Activated naive CD4-positive, alpha-beta T cell treated with anti-CD3 and anti-CD28 coated beads for 36 hours (primary cell): ENCODE measurements at regions of chr16 and their contacts with region 1.

Region 1: GRCh38 chr16:31700526-31701388 is 172.8 kb upstream of the ZNF267 start:
- DNase-seq: peak; percentile 93
- H3K4me3 Mint-ChIP-seq: peak overlapping the region; percentile 85
- H3K27ac Mint-ChIP-seq: peak overlapping the region; percentile 95
- H3K4me1 Mint-ChIP-seq: peaks cover 27% of the 10 kb centered on the region
- H3K27me3 Mint-ChIP-seq: no peaks in the 10 kb centered on the region

Region 2: GRCh38 chr16:31354394-31355291 is 346.1 kb before region 1 on chr16 and contains the start of gene ITGAX:
- CTCF ChIA-PET with region 1: no interaction called
- intact Hi-C with region 1: loop called (anchors 2 kb)
- DNase-seq: peak; percentile 91
- H3K4me3 Mint-ChIP-seq: no peak within 1 kb of the TSS
- H3K27ac Mint-ChIP-seq: peak within 1 kb of the TSS; percentile 80
- H3K4me1 Mint-ChIP-seq: peaks cover 27% of the 10 kb centered on the region
- H3K27me3 Mint-ChIP-seq: no peaks in the 10 kb centered on the region
- total RNA-seq, gene ITGAX: 2.4 to 2.9 TPM

Region 3: GRCh38 chr16:31382485-31383161 is 318.1 kb before region 1 on chr16:
- CTCF ChIA-PET with region 1: no interaction called
- intact Hi-C with region 1: loop called (anchors 10 kb)
- DNase-seq: peak; percentile 81
- H3K4me3 Mint-ChIP-seq: no peak overlapping the region
- H3K27ac Mint-ChIP-seq: no peak overlapping the region
- H3K4me1 Mint-ChIP-seq: peaks cover 15% of the 10 kb centered on the region
- H3K27me3 Mint-ChIP-seq: peaks cover 5% of the 10 kb centered on the region

Region 4: DNA sequence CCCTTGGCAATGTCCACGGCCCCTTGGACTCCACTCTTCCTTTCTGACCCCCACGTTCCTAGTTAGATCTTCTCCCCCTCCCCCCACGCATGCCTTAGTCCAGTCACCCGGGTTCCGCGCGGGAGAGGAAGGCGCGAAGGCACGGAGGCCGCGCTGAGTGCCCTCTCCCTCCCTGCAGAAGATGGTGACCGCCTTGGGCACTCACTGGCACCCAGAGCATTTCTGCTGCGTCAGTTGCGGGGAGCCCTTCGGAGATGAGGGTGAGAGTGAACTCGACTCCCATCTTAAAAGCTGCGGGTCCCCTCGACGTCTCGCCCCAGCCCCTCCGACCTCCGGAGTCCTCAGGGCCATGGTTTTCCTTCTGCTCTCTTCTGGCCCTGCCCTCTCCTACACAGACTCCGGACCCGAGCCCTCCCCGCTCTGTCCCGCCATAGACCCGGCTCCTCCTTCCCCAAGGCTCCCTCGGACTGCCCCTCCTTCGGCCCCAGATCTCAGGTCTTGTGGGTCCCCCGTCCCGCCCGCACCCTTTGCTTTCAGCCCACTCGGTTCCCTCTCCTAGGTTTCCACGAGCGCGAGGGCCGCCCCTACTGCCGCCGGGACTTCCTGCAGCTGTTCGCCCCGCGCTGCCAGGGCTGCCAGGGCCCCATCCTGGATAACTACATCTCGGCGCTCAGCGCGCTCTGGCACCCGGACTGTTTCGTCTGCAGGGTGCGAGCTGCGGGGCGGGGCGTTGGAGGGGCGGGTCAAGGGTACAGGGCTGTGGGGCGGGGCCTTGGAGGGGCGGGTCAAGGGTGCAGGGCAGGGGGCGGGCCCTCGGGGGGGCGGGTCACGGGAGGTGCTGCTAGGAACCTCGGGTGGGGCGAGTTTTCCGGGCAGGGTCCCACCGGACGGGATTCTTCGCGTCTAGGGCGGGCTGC is 224.2 kb before region 1 on chr16:
- CTCF ChIA-PET with region 1: no interaction called
- intact Hi-C with region 1: loop called (anchors 2 kb)
- DNase-seq: peak; percentile 93
- H3K4me3 Mint-ChIP-seq: peak overlapping the region; percentile 78
- H3K27ac Mint-ChIP-seq: no peak overlapping the region
- H3K4me1 Mint-ChIP-seq: peaks cover 16% of the 10 kb centered on the region
- H3K27me3 Mint-ChIP-seq: peaks cover 18% of the 10 kb centered on the region

Region 5: DNA sequence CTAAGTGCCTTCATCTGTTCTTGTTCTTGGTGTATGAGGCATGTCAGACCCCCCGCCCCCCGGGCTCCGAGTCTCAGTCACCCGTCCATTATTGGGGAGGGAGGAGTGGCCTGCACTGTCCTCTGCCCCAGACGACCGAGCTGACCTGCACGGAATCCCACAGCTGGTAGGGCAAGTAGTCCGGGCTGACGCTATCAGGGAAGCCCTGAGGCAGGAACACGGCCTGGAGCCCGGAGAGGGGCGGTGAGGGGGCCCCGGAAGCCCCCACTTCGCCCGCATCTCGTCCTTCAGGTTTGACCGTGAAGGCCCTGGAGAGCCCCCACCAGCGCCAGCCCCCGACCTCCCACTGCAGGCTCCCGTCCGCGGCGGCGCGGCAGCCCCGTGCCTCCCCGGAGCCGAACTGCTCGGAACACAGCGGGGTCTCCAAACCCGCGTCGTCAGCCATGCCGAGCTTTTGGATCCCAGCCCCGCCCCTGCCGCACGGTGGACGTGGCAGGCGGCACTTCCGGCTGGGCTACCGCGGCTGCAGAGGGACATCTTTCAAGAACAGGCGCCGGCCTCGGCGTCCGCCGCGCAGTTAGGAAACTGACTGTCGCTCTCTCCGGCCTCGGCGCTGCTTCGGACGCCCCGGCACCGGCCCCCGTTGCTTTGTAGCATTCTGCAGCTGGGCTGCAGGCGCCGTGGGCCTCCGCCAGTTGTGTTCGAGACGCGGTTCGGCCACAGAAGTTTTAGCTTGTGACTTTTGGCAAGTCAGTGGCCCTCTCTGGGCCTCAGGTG is 192.6 kb before region 1 on chr16 and contains the start of gene RUSF1:
- CTCF ChIA-PET with region 1: no interaction called
- intact Hi-C with region 1: loop called (anchors 2 kb)
- DNase-seq: peak; percentile 91
- H3K4me3 Mint-ChIP-seq: peak within 1 kb of the TSS; percentile 92
- H3K27ac Mint-ChIP-seq: peak within 1 kb of the TSS; percentile 97
- H3K4me1 Mint-ChIP-seq: peaks cover 42% of the 10 kb centered on the region
- H3K27me3 Mint-ChIP-seq: no peaks in the 10 kb centered on the region
- total RNA-seq, gene RUSF1: 24.0 to 26.0 TPM

Region 6: GRCh38 chr16:31537362-31538242 is 163.2 kb before region 1 on chr16:
- CTCF ChIA-PET with region 1: no interaction called
- intact Hi-C with region 1: no loop called
- DNase-seq: no peak
- H3K4me3 Mint-ChIP-seq: peak overlapping the region; percentile 43
- H3K27ac Mint-ChIP-seq: no peak overlapping the region
- H3K4me1 Mint-ChIP-seq: peaks cover 7% of the 10 kb centered on the region
- H3K27me3 Mint-ChIP-seq: peaks cover 27% of the 10 kb centered on the region

Region 7: DNA sequence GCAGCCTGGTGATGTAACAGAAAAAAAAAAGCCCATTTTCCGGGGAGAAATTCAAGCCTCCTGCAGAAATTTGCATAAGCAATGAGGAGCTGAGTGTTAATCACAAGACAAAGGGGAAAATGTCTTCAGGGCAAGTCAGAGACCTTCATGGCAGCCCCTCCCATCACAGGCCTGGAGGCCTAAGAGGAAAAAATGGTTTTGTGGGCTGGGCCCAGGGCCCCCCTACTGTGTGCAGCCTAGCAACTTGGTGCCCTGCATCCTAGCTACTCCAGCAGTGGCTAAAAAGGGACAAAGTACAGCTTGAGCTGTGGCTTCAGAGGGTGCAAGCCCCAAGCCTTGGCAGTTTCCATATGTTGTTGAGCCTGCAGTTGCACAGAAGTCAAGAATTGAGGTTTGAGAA is 123.3 kb before region 1 on chr16:
- CTCF ChIA-PET with region 1: no interaction called
- intact Hi-C with region 1: loop called (anchors 10 kb)
- DNase-seq: no peak
- H3K4me3 Mint-ChIP-seq: no peak overlapping the region
- H3K27ac Mint-ChIP-seq: no peak overlapping the region
- H3K4me1 Mint-ChIP-seq: no peaks in the 10 kb centered on the region
- H3K27me3 Mint-ChIP-seq: peaks cover 5% of the 10 kb centered on the region

Region 8: GRCh38 chr16:31713071-31713944 is 12.6 kb after region 1 on chr16:
- CTCF ChIA-PET with region 1: interaction called, 4 read pairs
- intact Hi-C with region 1: loop called (anchors 1 kb)
- DNase-seq: peak; percentile 97
- H3K4me3 Mint-ChIP-seq: peak overlapping the region; percentile 97
- H3K27ac Mint-ChIP-seq: peak overlapping the region; percentile 97
- H3K4me1 Mint-ChIP-seq: peaks cover 44% of the 10 kb centered on the region
- H3K27me3 Mint-ChIP-seq: no peaks in the 10 kb centered on the region

Region 9: GRCh38 chr16:31727553-31727952 is 26.8 kb after region 1 on chr16:
- CTCF ChIA-PET with region 1: no interaction called
- intact Hi-C with region 1: no loop called
- DNase-seq: no peak
- H3K4me3 Mint-ChIP-seq: no peak overlapping the region
- H3K27ac Mint-ChIP-seq: no peak overlapping the region
- H3K4me1 Mint-ChIP-seq: peaks cover 6% of the 10 kb centered on the region
- H3K27me3 Mint-ChIP-seq: no peaks in the 10 kb centered on the region

Region 10: DNA sequence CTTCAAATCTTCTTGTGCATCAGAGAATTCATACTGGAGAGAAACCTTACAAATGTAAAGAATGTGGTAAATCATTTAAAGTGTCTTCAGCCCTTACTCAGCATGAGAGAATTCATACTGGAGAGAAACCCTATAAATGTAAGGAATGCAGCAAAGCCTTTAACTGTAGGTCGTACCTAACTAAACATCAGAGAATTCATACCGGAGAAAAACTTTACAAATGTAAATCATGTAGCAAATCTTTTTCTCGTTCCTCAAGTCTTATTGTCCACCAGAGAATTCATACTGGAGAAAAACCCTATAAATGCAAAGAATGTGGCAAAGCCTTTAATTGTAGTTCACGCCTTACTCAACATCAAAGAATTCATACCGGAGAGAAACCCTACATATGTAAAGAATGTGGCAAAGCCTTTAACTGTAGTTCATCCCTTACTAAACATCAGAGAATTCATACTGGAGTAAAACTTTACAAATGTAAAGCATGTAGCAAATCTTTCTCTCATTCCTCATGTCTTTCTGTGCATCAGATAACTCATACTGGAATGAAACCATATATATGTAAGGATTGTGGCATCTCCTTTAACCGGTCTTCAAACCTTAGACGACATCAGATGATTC is 54.4 kb after region 1 on chr16:
- CTCF ChIA-PET with region 1: no interaction called
- intact Hi-C with region 1: no loop called
- DNase-seq: no peak
- H3K4me3 Mint-ChIP-seq: no peak overlapping the region
- H3K27ac Mint-ChIP-seq: no peak overlapping the region
- H3K4me1 Mint-ChIP-seq: no peaks in the 10 kb centered on the region
- H3K27me3 Mint-ChIP-seq: no peaks in the 10 kb centered on the region